ENCODE measurements at regions of chr6 and their contacts with region 1.

Region 1: DNA sequence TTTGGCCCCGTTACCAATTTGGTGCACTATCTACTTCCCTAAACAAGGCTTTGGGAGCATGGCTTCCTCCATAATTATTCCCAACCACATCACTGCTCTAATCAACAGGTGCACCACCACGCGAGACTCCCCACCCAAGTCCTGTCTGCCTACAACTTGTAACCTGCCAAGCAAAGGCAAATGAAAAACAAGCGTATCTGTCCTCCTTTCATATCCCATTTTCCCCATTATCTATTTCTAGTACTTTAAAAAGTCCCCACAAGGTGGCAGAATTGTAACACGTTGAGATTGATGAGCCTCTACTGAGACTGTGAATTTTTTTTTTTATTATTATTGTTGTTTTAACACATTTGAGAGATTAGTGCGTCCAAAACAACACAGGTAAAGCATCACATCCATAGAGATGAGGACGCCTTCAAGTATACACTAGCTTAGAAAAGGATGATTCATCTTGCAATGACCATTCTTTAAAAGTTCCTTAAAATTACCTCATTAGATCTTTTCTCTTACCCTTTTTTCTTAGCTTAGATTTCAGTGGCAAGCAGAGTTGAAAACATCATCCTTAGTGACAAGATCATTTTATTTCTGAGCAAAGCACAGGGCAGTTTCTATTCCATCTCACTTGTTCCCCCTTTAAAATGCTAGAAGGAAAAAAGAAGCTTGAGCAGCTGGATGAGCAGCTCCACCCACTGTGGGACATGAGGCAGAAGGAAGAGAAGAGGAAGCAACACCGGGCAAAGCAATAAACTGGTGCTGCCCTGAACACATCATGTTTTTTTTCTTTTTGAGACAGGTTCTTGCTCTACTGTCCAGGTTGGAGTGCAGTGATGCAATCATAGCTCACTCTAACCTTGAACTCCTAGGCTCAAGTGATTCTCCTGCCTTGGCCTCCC is 210.8 kb downstream of the ARHGAP18 start:
- DNase-seq: peak; percentile 57 to 70 (median 62)
- H3K4me3 ChIP-seq: peak overlapping the region in 1 of 7 experiments; percentile 63
- H3K27ac ChIP-seq: no peak overlapping the region
- H3K4me1 ChIP-seq: peaks cover 3 to 23% (median 14%) of the 10 kb centered on the region in 4 experiments
- H3K27me3 ChIP-seq: peaks cover 0 to 6% (median 0%) of the 10 kb centered on the region in 5 experiments

Region 2: DNA sequence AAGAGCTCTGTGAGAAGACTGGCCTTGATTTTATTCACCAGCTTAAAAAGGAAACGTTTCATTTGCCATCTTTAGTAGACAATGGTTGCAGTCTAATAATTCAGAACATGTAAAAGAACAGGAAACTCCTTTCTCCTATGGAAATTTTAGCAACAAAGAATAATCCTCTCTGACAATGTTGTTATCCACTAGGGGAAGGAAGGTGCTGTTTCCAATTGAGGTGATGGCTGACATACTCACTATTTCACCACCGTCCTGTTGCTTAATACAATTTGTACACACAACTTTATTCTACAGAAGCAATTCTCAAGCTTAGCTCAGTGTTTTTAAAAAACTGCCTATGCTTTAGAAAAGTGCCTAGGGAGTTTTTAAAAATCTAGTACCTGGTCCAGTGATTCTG is 18.1 kb after region 1 on chr6:
- CTCF ChIA-PET with region 1: interaction called, 14 read pairs
- POLR2A ChIA-PET with region 1: no interaction called
- DNase-seq: no peak
- H3K4me3 ChIP-seq: no peak overlapping the region
- H3K27ac ChIP-seq: no peak overlapping the region
- H3K4me1 ChIP-seq: no peaks in the 10 kb centered on the region
- H3K27me3 ChIP-seq: no peaks in the 10 kb centered on the region